ENCODE measurements at regions of chr4 and their contacts with region 1.

Region 1: DNA sequence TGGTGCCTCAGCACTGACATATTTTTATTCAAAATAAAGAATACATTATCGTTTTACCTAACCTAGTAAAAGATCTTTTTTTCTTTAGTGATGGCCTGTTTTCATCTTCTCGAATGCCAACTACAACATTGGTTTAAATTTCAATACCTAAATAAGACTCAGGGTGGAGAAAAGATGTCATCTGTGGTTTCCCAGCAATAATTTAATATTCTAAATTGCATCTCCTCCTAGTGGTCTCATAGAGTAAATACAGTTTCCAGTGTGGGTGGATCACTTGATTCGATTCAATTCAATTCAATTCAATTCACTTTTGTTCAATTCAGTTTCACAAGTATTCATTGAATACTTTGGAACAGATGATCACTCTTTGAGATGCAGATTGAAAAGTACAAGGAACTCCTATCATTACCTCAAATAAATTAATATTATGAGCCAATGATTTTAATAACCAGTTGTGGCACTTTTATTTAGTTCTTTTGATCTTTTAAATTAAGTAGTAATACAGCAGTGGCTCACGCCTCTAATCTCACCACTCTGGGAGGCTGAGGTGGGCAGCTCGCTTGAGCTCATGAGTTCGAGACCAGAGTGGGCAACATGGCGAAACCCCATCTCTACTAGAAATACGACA is 427.2 kb downstream of the FAT4 start:
- DNase-seq: no peak
- H3K4me3 ChIP-seq: no peak overlapping the region
- H3K27ac ChIP-seq: no peak overlapping the region
- H3K4me1 ChIP-seq: no peaks in the 10 kb centered on the region
- H3K27me3 ChIP-seq: no peaks in the 10 kb centered on the region
- CTCF ChIP-seq: peak in 5 of 6 experiments; percentile 26 to 63 (median 43)
- POLR2A ChIP-seq: no peak

Region 2: DNA sequence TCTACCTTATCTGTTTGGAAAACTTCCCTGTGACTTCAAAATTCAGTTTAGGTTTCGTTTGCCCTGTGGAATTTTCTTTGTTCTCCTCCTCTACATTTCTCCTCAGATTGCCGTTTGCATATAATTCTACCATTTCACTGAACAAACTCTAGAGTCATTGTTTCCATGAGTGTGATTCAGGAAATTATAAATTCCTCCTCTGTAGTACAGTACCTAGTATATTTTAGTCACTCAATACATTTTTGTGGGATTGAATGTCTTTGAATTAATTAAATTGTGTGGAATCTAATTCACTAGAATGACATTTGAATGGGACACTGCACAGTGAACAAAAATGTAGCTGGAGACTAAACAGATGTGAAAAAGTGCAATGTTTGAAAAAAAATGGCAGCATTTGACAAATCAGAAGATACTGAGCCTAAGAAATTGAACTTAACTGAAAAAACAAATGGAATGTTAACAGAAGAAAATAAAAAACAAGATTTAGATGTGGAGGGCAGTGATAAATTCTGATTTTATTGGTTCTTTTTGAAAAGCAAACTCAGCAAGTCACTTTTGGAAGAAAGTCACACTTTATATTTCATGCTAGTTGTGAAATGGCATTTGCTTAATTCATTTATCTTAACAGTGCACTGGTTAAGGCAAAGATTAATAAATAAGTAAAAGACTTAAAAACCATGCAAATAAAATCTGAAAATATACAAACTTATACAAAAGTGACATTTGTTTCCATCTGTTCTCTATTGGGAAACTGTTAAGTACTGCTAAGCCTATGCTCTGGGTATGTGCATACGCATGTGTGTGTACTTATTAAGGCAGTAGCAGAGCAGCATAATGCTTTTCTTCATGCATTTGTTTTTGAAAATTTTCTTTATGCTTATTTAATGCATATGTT is 85.1 kb after region 1 on chr4:
- intact Hi-C with region 1: no loop called
- DNase-seq: no peak
- H3K4me3 ChIP-seq: no peak overlapping the region
- H3K27ac ChIP-seq: no peak overlapping the region
- H3K4me1 ChIP-seq: no peaks in the 10 kb centered on the region
- H3K27me3 ChIP-seq: no peaks in the 10 kb centered on the region
- CTCF ChIP-seq: no peak
- POLR2A ChIP-seq: no peak

Region 3: DNA sequence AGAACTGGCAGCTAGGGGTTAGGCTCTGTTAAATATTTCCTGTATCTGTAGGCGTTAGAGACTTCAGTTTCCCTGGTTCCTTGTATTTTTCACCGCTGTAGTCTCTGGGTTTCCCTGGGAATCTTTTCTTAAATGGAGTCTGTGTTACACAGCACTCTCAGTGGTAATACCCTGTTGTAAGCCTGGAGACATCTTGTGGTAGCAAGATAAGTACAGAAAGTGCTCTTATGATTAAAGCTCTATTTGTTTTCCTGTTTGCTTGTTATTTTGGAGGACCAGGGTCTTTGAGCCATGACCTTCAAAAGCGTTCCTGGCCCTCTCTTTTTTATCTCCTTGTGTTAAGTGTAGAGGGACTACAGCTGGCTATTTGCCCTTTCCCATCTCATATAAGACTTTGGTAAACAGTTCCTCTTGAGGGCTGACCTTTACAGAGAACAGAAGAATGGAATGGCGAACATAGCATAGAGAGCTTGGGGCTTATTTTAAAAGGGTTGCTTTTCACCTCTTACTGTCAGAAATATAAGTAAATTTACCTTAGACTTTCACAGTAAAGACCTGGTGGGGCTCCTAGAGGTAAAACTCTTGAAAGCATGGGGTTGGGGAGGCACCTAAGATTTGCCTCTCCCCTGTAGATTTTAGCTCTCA is 355.3 kb after region 1 on chr4:
- intact Hi-C with region 1: loop called (anchors 10 kb)
- DNase-seq: no peak
- H3K4me3 ChIP-seq: no peak overlapping the region
- H3K27ac ChIP-seq: no peak overlapping the region
- H3K4me1 ChIP-seq: no peaks in the 10 kb centered on the region
- H3K27me3 ChIP-seq: no peaks in the 10 kb centered on the region
- CTCF ChIP-seq: no peak
- POLR2A ChIP-seq: no peak

Region 4: DNA sequence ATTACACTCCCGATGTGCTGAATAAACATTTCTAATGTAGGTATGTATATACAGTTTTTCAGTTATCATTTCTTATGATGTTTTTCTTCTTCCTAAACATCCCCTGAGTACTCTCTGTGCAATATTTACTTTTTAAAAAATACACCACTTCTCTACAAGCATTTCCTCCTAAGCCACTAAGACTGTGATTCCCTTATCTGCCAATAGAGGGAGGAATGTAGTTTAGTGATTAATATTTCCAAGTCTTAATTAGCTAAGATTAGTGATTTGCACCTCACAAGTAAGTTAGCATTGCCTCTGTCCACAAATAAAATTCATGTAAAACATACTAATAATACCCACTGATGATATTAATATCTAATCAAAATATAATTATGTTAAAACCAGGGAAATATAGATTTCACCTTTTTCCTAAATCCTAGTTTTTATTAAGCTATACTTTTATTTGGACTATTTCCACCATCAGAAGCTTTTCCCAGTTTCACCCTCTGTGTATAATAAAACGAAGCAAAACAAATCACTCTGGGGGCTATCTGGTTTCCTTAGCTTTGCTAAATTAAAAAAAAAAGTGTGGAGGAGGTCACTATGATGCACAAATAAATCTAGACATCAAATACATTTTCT is 482.0 kb after region 1 on chr4:
- intact Hi-C with region 1: no loop called
- DNase-seq: no peak
- H3K4me3 ChIP-seq: no peak overlapping the region
- H3K27ac ChIP-seq: no peak overlapping the region
- H3K4me1 ChIP-seq: no peaks in the 10 kb centered on the region
- H3K27me3 ChIP-seq: no peaks in the 10 kb centered on the region
- CTCF ChIP-seq: peak; percentile 21 to 66 (median 36)
- POLR2A ChIP-seq: no peak

Measured in esophagus squamous epithelium (tissue), 5 donors.